ENCODE measurements at regions of chr11 and their contacts with region 1.

Region 1: GRCh38 chr11:12100841-12101242 is 9.5 kb upstream of the MICAL2 start:
- DNase-seq: peak in 1 of 2 donors; percentile 50
- H3K4me3 ChIP-seq: no peak overlapping the region
- H3K27ac ChIP-seq: no peak overlapping the region
- H3K4me1 ChIP-seq: peaks cover 0 to 24% (median 12%) of the 10 kb centered on the region in 4 donors
- H3K27me3 ChIP-seq: no peaks in the 10 kb centered on the region
- CTCF ChIP-seq: no peak
- EP300 ChIP-seq: no peak
- POLR2A ChIP-seq: no peak

Region 2: DNA sequence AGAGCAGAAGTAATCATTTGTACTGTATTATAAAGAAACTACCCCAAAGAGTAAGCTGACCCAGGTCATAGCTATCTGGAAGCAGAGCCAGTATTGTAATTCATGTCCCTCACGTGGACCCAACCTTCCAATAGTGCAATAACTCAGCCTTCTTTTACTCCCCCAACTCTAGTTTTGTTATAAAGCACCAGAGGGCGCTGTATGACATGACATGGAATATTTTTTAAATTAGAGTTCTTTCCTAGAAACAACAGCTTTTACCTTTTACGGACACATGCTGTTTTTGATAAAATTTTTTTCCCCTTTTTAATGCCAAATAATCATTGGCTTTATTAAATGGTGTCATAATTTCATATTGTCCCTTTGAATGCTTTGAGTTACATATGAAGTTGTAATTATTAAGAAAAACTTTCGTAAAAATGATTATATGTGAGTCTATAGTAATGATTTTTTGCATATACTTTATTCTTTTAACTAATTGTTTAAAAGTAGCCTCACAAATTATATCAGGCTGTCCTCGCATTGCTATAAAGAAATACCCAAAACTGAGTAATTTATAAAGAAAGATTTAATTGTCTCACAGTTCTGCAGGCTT is 169.3 kb before region 1 on chr11:
- intact Hi-C with region 1: no loop called
- DNase-seq: peak in 1 of 2 donors; percentile 71
- H3K4me3 ChIP-seq: no peak overlapping the region
- H3K27ac ChIP-seq: no peak overlapping the region
- H3K4me1 ChIP-seq: no peaks in the 10 kb centered on the region
- H3K27me3 ChIP-seq: no peaks in the 10 kb centered on the region
- CTCF ChIP-seq: peak in 5 of 7 experiments; percentile 30 to 66 (median 53)
- EP300 ChIP-seq: no peak
- POLR2A ChIP-seq: no peak

Region 3: DNA sequence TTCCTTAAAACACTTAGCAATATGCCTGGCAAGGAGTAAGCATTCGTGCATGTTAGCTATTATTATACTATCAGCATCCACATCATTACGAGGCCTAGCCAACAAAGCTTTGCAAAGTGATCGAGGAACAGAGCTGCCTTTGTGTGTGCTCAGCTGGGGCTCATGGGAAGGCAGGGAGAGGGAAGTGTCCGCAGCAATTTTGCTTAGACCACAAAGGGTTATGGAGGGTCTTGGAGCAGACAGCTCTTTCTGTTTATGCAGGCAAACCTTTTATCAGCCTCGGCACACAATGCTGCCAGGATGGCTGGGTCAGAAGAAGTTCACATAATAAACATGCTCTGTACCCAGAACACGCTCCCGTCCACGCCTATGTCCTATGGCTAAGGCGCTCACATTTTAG is 81.5 kb before region 1 on chr11:
- intact Hi-C with region 1: no loop called
- DNase-seq: peak; percentile 46 to 81
- H3K4me3 ChIP-seq: no peak overlapping the region
- H3K27ac ChIP-seq: peak overlapping the region; percentile 51 to 73 (median 60)
- H3K4me1 ChIP-seq: peaks cover 9 to 45% (median 30%) of the 10 kb centered on the region in 4 donors
- H3K27me3 ChIP-seq: no peaks in the 10 kb centered on the region
- CTCF ChIP-seq: no peak
- EP300 ChIP-seq: no peak
- POLR2A ChIP-seq: no peak

Region 4: GRCh38 chr11:12216671-12217374 is 116.0 kb after region 1 on chr11:
- intact Hi-C with region 1: loop called (anchors 10 kb)
- DNase-seq: peak; percentile 56 to 76
- H3K4me3 ChIP-seq: no peak overlapping the region
- H3K27ac ChIP-seq: peak overlapping the region; percentile 58 to 88 (median 80)
- H3K4me1 ChIP-seq: peaks cover 64 to 73% (median 70%) of the 10 kb centered on the region in 4 donors
- H3K27me3 ChIP-seq: no peaks in the 10 kb centered on the region
- CTCF ChIP-seq: no peak
- EP300 ChIP-seq: no peak
- POLR2A ChIP-seq: no peak

Region 5: DNA sequence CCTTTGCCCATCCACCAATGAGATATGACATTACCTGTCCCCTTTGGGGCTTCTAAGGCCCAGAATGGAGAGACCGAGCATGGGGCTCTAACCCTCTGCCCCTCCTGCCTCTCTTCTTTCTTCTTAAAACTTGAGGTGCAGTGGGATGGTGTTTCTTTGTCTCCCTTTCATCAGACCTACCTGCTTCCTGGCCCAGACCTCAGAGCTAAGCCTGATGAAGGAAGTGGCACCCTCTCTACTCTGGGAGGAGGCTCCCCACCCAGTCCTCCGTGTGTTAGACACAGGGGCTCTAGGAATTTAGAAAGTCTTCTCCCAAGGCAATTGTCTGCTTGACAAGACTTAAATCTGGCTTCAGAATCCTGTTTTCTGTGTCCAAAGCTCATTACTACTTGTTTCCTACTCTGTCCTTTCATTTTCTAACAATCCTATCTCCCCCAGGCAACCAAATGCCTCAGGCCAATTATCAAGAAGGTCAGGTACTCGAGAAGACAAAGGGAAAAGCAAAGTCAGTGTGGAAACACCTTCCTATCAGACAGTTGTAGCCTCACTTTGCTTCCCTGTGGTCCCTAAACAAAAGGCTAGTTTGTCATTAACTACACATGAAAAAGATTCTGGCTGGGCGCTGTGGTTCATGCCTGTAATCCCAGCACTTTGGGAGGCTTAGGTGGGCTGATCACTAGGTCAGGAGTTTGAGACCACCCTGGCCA is 256.3 kb after region 1 on chr11:
- intact Hi-C with region 1: no loop called
- DNase-seq: no peak
- H3K4me3 ChIP-seq: no peak overlapping the region
- H3K27ac ChIP-seq: no peak overlapping the region
- H3K4me1 ChIP-seq: peaks cover 6 to 19% (median 13%) of the 10 kb centered on the region in 4 donors
- H3K27me3 ChIP-seq: no peaks in the 10 kb centered on the region
- CTCF ChIP-seq: no peak
- EP300 ChIP-seq: no peak
- POLR2A ChIP-seq: no peak